CD4-positive, alpha-beta T cell (primary cell): ENCODE measurements at regions of chr3 and their contacts with region 1.

Region 1: GRCh38 chr3:14915636-14916222 is 31.7 kb upstream of the NR2C2 start:
- DNase-seq: peak in 12 of 14 experiments; percentile 12 to 57 (median 31)
- ATAC-seq: peak; percentile 63
- H3K4me3 ChIP-seq: no peak overlapping the region
- H3K4me3 Mint-ChIP-seq: no peak overlapping the region
- H3K27ac ChIP-seq: no peak overlapping the region
- H3K27ac Mint-ChIP-seq: no peak overlapping the region
- H3K4me1 ChIP-seq: no peaks in the 10 kb centered on the region
- H3K4me1 Mint-ChIP-seq: no peaks in the 10 kb centered on the region
- H3K27me3 ChIP-seq: no peaks in the 10 kb centered on the region
- H3K27me3 Mint-ChIP-seq: no peaks in the 10 kb centered on the region
- CTCF ChIP-seq: peak; percentile 35

Region 2: GRCh38 chr3:14791343-14791945 is 124.3 kb before region 1 on chr3:
- CTCF ChIA-PET with region 1: no interaction called
- POLR2A ChIA-PET with region 1: no interaction called
- intact Hi-C with region 1: loop called in 1 of 2 experiments (anchors 1 kb)
- DNase-seq: peak; percentile 21 to 75 (median 45)
- ATAC-seq: no peak
- H3K4me3 ChIP-seq: no peak overlapping the region
- H3K4me3 Mint-ChIP-seq: no peak overlapping the region
- H3K27ac ChIP-seq: no peak overlapping the region
- H3K27ac Mint-ChIP-seq: no peak overlapping the region
- H3K4me1 ChIP-seq: peaks cover 3% of the 10 kb centered on the region
- H3K4me1 Mint-ChIP-seq: no peaks in the 10 kb centered on the region
- H3K27me3 ChIP-seq: peaks cover 0 to 3% of the 10 kb centered on the region in 2 experiments
- H3K27me3 Mint-ChIP-seq: peaks cover 33% of the 10 kb centered on the region
- CTCF ChIP-seq: peak; percentile 50

Region 3: GRCh38 chr3:14857506-14857905 is 58.2 kb before region 1 on chr3:
- CTCF ChIA-PET with region 1: no interaction called
- POLR2A ChIA-PET with region 1: no interaction called
- intact Hi-C with region 1: loop called in 1 of 2 experiments (anchors 5 kb)
- DNase-seq: peak in 1 of 14 experiments; percentile 13
- ATAC-seq: no peak
- H3K4me3 ChIP-seq: no peak overlapping the region
- H3K4me3 Mint-ChIP-seq: no peak overlapping the region
- H3K27ac ChIP-seq: no peak overlapping the region
- H3K27ac Mint-ChIP-seq: no peak overlapping the region
- H3K4me1 ChIP-seq: no peaks in the 10 kb centered on the region
- H3K4me1 Mint-ChIP-seq: no peaks in the 10 kb centered on the region
- H3K27me3 ChIP-seq: no peaks in the 10 kb centered on the region
- H3K27me3 Mint-ChIP-seq: peaks cover 26% of the 10 kb centered on the region
- CTCF ChIP-seq: no peak